ENCODE measurements at regions of chr5 and their contacts with region 1.

Region 1: DNA sequence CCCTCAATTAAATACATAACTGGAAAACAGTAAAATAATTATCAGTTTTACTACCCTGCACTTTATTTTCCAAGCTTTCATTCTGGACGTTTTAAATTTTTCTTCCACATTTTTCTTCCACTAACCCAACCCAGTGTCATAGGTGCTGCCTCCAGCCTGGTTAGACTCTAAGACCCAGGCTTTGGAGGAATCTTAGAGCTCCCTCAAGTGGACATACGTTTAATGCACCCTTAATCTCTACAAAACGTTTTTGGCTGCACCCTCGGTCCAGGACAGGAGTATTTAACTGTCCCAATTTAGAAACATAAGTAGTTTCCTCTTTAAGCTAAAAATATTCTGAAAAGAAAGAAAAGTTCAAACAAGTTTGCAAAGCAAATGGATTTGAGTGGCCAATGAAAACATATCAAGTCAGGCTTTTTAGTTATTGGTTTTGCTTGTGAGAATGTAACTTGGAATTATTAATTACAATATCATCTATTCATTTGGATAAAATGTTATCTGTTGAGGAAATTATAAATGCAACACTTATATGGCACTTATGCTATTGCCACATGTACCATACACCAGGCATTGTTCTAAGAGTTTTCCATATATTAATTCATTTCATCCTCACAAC is 38.9 kb downstream of the CDH6 start:
- DNase-seq: peak; percentile 9
- H3K4me3 Mint-ChIP-seq: no peak overlapping the region
- H3K27ac Mint-ChIP-seq: no peak overlapping the region
- H3K4me1 Mint-ChIP-seq: no peaks in the 10 kb centered on the region
- H3K27me3 Mint-ChIP-seq: peaks cover 3% of the 10 kb centered on the region

Region 2: GRCh38 chr5:30040488-30041118 is 1191.8 kb before region 1 on chr5:
- CTCF ChIA-PET with region 1: no interaction called
- intact Hi-C with region 1: loop called (anchors 2 kb)
- DNase-seq: peak; percentile 34
- H3K4me3 Mint-ChIP-seq: no peak overlapping the region
- H3K27ac Mint-ChIP-seq: no peak overlapping the region
- H3K4me1 Mint-ChIP-seq: no peaks in the 10 kb centered on the region
- H3K27me3 Mint-ChIP-seq: no peaks in the 10 kb centered on the region

Region 3: DNA sequence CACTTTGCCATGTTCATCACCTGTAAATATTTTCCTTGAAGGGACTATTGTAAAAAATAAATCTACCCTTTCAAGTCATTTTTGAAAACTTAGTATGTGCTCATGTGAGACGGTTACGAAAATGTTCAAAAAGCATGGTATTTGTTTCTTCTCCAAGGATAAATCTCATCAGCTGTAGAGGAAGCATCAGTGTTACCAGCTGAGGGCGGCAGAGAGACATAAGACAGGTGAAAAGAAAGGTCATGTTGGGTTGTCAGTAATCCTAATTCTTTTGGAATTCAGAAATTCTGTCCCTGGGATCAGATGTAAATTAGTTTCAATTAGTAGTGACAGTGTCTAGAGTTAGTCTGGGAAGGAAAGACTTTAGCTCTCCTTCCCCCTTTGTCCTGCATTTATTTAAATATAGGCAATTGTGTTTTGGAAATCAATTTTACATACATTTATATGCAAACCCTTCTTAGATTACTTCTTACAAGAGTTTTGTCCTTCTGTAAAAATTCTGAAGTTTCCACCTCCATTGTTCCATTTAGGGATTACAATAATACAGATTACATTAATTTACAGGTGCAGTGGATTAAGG is 830.8 kb before region 1 on chr5:
- CTCF ChIA-PET with region 1: no interaction called
- intact Hi-C with region 1: loop called (anchors 5 kb)
- DNase-seq: peak; percentile 22
- H3K4me3 Mint-ChIP-seq: no peak overlapping the region
- H3K27ac Mint-ChIP-seq: no peak overlapping the region
- H3K4me1 Mint-ChIP-seq: no peaks in the 10 kb centered on the region
- H3K27me3 Mint-ChIP-seq: no peaks in the 10 kb centered on the region

Measured in activated naive CD4-positive, alpha-beta T cell treated with anti-CD3 and anti-CD28 coated beads for 36 hours (primary cell).